ENCODE measurements at regions of chr11 and their contacts with region 1.

Region 1: DNA sequence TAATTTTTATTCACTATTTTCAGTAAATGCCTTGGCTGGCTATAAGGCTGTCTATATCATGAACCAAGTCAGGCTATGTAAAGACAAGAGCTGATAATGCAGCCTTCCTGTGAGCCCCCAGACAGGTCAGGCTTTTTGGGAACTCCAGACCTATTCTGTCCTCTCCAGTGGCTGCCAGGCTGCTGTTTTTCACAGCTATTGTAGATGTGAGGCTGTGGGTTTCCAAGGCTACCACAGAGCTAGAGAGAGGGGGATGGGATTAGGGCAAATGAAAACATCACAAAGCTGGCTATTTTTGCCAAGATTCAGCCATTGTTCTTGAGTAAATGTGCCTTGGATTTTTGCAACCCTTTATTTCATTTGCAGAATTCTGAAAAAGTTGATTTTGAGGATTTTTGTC is 55.7 kb upstream of the SORL1-AS1 start:
- DNase-seq: no peak
- ATAC-seq: no peak
- H3K4me3 ChIP-seq: no peak overlapping the region
- H3K27ac ChIP-seq: no peak overlapping the region
- H3K4me1 ChIP-seq: no peaks in the 10 kb centered on the region
- H3K27me3 ChIP-seq: no peaks in the 10 kb centered on the region; the same call in 1 of the 2 replicates
- CTCF ChIP-seq: no peak
- POLR2A ChIP-seq: no peak
- RAD21 ChIP-seq: no peak

Region 2: GRCh38 chr11:121476379-121477032 is 31.9 kb before region 1 on chr11:
- CTCF ChIA-PET with region 1: no interaction called
- POLR2A ChIA-PET with region 1: no interaction called
- dilution Hi-C with region 1: no loop called
- in situ Hi-C with region 1: no loop called
- intact Hi-C with region 1: no loop called
- DNase-seq: no peak
- ATAC-seq: no peak
- H3K4me3 ChIP-seq: no peak overlapping the region
- H3K27ac ChIP-seq: no peak overlapping the region
- H3K4me1 ChIP-seq: no peaks in the 10 kb centered on the region
- H3K27me3 ChIP-seq: peaks cover 7% of the 10 kb centered on the region
- CTCF ChIP-seq: no peak
- POLR2A ChIP-seq: no peak
- RAD21 ChIP-seq: no peak

Region 3: DNA sequence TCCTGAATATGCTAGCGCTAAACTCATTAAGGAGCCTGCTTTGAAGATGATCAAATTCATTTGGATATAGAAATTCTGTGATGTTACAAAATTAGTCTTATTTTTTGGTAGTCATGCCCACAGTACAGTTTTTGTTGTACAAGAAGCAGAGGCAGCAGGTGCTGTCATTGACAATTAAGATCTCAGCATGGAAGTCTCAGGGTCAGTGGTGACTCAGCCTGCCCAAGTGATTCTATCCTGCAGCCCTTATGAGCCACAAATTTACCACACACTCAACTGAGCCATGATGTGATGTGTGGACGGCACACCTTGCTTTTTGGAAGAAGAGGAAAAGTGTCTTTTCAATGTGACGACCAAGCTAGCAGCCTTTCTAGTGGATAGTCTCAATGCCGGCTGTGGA is 97.9 kb after region 1 on chr11:
- CTCF ChIA-PET with region 1: no interaction called
- POLR2A ChIA-PET with region 1: no interaction called
- dilution Hi-C with region 1: no loop called
- in situ Hi-C with region 1: no loop called
- intact Hi-C with region 1: no loop called
- DNase-seq: peak; percentile 23
- ATAC-seq: no peak
- H3K4me3 ChIP-seq: no peak overlapping the region
- H3K27ac ChIP-seq: no peak overlapping the region
- H3K4me1 ChIP-seq: peaks cover 4% of the 10 kb centered on the region; the same call in 1 of the 2 replicates
- H3K27me3 ChIP-seq: no peaks in the 10 kb centered on the region
- CTCF ChIP-seq: no peak
- POLR2A ChIP-seq: no peak
- RAD21 ChIP-seq: no peak

Region 4: DNA sequence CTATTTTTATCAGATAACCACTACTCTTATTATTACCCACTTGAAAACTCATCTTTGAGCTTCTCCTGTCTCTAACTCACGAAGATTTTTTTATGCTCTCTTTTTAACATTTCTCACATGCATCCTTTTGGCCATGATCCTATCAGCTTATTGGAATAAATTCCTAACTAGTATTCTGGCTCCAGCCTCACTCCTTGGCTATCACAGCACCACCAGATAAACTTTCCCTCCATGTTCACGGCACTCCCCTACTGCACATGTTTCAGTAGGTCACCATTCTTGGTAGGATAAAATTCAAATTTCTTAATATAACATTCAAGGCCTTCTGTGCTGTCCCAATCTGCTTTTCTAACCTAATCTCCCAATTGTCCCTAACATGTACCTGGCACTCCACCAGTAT is 960.5 kb after region 1 on chr11:
- CTCF ChIA-PET with region 1: no interaction called
- POLR2A ChIA-PET with region 1: no interaction called
- dilution Hi-C with region 1: no loop called
- in situ Hi-C with region 1: no loop called
- intact Hi-C with region 1: loop called (anchors 2 kb)
- DNase-seq: no peak
- ATAC-seq: no peak
- H3K4me3 ChIP-seq: no peak overlapping the region
- H3K27ac ChIP-seq: no peak overlapping the region
- H3K4me1 ChIP-seq: no peaks in the 10 kb centered on the region
- H3K27me3 ChIP-seq: no peaks in the 10 kb centered on the region; the same call in 1 of the 2 replicates
- CTCF ChIP-seq: no peak
- POLR2A ChIP-seq: no peak
- RAD21 ChIP-seq: no peak